CD8-positive, alpha-beta memory T cell (primary cell): ENCODE measurements at regions of chr13 and their contacts with region 1.

Region 1: DNA sequence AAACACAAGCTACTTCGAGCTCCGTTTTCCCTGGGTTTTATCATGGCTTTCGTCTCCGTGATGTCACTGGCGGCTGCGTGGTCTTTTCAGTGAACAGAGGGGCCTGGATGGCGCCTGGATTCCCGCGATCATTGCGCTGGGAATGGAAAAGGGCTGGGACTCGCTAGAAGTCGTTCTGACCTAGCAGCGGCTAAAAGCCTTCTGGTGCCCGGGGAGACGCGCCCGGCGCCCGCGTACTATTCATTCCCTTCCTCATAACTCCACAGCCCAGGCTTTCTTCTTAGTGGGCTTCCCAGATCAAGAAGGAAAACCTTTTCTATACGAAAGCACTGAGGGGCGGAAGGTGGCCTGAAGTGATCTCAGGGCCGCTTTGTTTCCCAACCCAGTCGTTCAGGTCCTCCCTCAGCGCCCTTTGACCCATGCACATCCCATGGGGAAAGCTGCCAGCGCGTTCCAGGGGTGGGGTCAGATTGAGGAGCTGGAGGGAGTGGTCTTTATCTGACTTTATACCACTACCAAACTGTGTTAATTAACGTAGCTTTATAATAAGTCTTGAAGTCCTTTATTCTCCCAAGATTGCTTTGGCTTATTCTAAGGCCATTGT is 96.6 kb downstream of the ELF1 start:
- DNase-seq: no peak
- H3K4me3 ChIP-seq: no peak overlapping the region
- H3K4me3 Mint-ChIP-seq: peak overlapping the region; percentile 54 to 84 (median 72)
- H3K27ac ChIP-seq: no peak overlapping the region
- H3K27ac Mint-ChIP-seq: peak overlapping the region in 6 of 8 donors; percentile 47 to 87 (median 76)
- H3K4me1 ChIP-seq: peaks cover 7% of the 10 kb centered on the region
- H3K4me1 Mint-ChIP-seq: peaks cover 21 to 35% (median 31%) of the 10 kb centered on the region in 3 donors
- H3K27me3 ChIP-seq: no peaks in the 10 kb centered on the region
- H3K27me3 Mint-ChIP-seq: no peaks in the 10 kb centered on the region

Region 2: GRCh38 chr13:40789275-40790133 is 133.0 kb before region 1 on chr13 and contains the start of gene SLC25A15:
- CTCF ChIA-PET with region 1: interaction called, 10 read pairs
- POLR2A ChIA-PET with region 1: no interaction called
- DNase-seq: peak; percentile 68 to 80 (median 76)
- H3K4me3 ChIP-seq: peak within 1 kb of the TSS; percentile 60
- H3K4me3 Mint-ChIP-seq: peak within 1 kb of the TSS; percentile 80 to 92 (median 84)
- H3K27ac ChIP-seq: no peak within 1 kb of the TSS
- H3K27ac Mint-ChIP-seq: peak within 1 kb of the TSS; percentile 71 to 88 (median 84)
- H3K4me1 ChIP-seq: peaks cover 7% of the 10 kb centered on the region
- H3K4me1 Mint-ChIP-seq: peaks cover 23 to 57% (median 50%) of the 10 kb centered on the region in 3 donors
- H3K27me3 ChIP-seq: no peaks in the 10 kb centered on the region
- H3K27me3 Mint-ChIP-seq: peaks cover 0 to 2% of the 10 kb centered on the region in 2 donors
- total RNA-seq, gene SLC25A15: 23.9 to 24.3 TPM